IMR-90 (cell line): ENCODE measurements at regions of chr4 and their contacts with region 1.

Region 1: GRCh38 chr4:37452952-37453280 is 208.4 kb downstream of the NWD2 start:
- DNase-seq: peak; percentile 48
- ATAC-seq: peak; percentile 44; the same call in 1 of the 2 replicates
- H3K4me3 ChIP-seq: no peak overlapping the region
- H3K27ac ChIP-seq: no peak overlapping the region
- H3K4me1 ChIP-seq: no peaks in the 10 kb centered on the region
- H3K27me3 ChIP-seq: peaks cover 21% of the 10 kb centered on the region
- CTCF ChIP-seq: peak; percentile 45
- POLR2A ChIP-seq: no peak
- RAD21 ChIP-seq: peak; percentile 46

Region 2: DNA sequence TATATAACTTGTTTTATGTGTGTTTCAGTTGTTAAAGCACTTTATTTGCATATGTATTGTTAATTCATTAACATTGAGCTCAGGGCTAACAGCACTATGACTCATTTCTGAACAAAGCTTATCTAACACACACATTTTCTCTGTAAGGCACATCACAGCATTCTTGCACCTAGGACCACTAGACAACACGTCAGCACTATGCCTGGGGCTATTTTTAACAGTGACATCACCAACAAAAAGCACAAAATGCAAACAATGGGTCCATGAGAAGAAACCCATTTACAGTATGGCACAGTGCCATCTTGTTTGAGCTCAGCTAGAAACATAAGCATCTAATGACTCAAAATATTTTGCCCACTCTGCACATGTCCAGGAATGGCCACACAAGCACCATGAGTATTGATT is 108.9 kb after region 1 on chr4:
- CTCF ChIA-PET with region 1: interaction called, 4 read pairs
- POLR2A ChIA-PET with region 1: no interaction called
- dilution Hi-C with region 1: no loop called
- in situ Hi-C with region 1: loop called (anchors 10 kb)
- intact Hi-C with region 1: loop called (anchors 1 kb)
- DNase-seq: peak; percentile 80
- ATAC-seq: no peak
- H3K4me3 ChIP-seq: no peak overlapping the region
- H3K27ac ChIP-seq: no peak overlapping the region
- H3K4me1 ChIP-seq: no peaks in the 10 kb centered on the region
- H3K27me3 ChIP-seq: no peaks in the 10 kb centered on the region
- CTCF ChIP-seq: no peak
- POLR2A ChIP-seq: no peak
- RAD21 ChIP-seq: no peak

Region 3: GRCh38 chr4:37793562-37793961 is 340.6 kb after region 1 on chr4:
- CTCF ChIA-PET with region 1: no interaction called
- POLR2A ChIA-PET with region 1: no interaction called
- dilution Hi-C with region 1: no loop called
- in situ Hi-C with region 1: no loop called
- intact Hi-C with region 1: loop called (anchors 5 kb)
- DNase-seq: peak; percentile 7
- ATAC-seq: peak; percentile 81
- H3K4me3 ChIP-seq: no peak overlapping the region
- H3K27ac ChIP-seq: no peak overlapping the region
- H3K4me1 ChIP-seq: no peaks in the 10 kb centered on the region
- H3K27me3 ChIP-seq: peaks cover 10% of the 10 kb centered on the region
- CTCF ChIP-seq: peak; percentile 59
- POLR2A ChIP-seq: no peak
- RAD21 ChIP-seq: peak; percentile 74

Region 4: DNA sequence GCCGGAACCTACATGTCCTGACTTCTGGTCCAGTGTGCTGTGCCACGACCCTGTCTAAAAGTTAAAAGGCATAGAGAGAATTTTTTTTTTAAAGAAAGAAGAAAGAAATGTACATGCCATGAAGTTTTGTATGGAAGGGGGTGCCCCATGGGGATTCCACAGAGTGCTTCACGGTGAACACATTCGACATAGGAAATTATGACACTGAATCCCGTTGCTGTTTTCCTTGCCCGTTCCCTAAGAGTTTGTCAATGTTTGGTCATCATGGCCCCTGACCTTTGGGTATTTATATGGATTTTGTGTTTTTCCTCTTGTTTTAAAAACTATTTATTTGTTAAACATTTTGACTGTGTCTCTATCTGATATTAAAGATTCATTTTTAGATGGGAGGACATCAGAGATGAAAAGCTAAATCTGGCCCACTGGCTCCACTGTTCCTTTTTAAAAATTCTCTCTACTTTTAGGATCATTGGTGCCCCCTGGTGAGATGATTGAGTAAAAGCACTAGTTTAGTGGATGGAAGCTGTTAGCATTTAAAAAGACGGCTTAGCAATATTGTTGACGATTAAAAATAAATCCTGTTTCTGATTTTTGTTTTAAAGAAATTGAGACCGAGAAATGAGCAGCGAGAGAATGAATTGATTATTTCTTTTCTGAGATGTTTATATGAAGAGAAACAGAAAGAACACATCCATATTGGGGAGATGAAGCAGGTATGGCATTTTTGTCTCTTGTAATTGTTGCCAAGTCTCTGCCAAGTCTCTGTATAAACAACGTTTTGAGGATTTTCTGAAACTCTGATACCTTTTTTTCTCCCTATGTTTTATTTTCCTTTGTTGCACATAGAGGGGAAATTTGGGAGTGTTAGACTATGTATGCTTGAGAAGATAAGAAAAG is 582.3 kb after region 1 on chr4:
- CTCF ChIA-PET with region 1: no interaction called
- POLR2A ChIA-PET with region 1: no interaction called
- dilution Hi-C with region 1: no loop called
- in situ Hi-C with region 1: no loop called
- intact Hi-C with region 1: loop called (anchors 10 kb)
- DNase-seq: peak; percentile 70
- ATAC-seq: peak; percentile 85
- H3K4me3 ChIP-seq: no peak overlapping the region
- H3K27ac ChIP-seq: no peak overlapping the region
- H3K4me1 ChIP-seq: peaks cover 1% of the 10 kb centered on the region; the same call in 1 of the 2 replicates
- H3K27me3 ChIP-seq: no peaks in the 10 kb centered on the region
- CTCF ChIP-seq: peak; percentile 75
- POLR2A ChIP-seq: no peak
- RAD21 ChIP-seq: peak; percentile 75